Gastrocnemius medialis (tissue), 4 donors: ENCODE measurements at regions of chr16 and their contacts with region 1.

Region 1: GRCh38 chr16:84186685-84187437 is at the start of gene TAF1C:
- DNase-seq: peak; percentile 74 to 92
- ATAC-seq: peak; percentile 91 to 97
- H3K4me3 ChIP-seq: peak within 1 kb of the TSS; percentile 74 to 100 (median 98)
- H3K27ac ChIP-seq: peak within 1 kb of the TSS; percentile 81 to 86 (median 82)
- H3K4me1 ChIP-seq: peaks cover 0 to 8% of the 10 kb centered on the region in 2 donors
- H3K27me3 ChIP-seq: no peaks in the 10 kb centered on the region
- CTCF ChIP-seq: peak; percentile 92 to 97 (median 96)
- POLR2A ChIP-seq: peak; percentile 10 to 34
- total RNA-seq, gene TAF1C: 6.8 to 35.5 (median 12.3) TPM

Region 2: GRCh38 chr16:83807710-83808572 is 378.9 kb before region 1 on chr16 and contains the start of gene HSBP1:
- in situ Hi-C with region 1: loop called in 1 of 4 experiments (anchors 25 kb)
- intact Hi-C with region 1: no loop called
- DNase-seq: peak; percentile 89 to 94
- ATAC-seq: peak; percentile 96
- H3K4me3 ChIP-seq: peak within 1 kb of the TSS; percentile 85 to 96 (median 90)
- H3K27ac ChIP-seq: peak within 1 kb of the TSS; percentile 73 to 86 (median 84)
- H3K4me1 ChIP-seq: peaks cover 10 to 17% of the 10 kb centered on the region in 2 donors
- H3K27me3 ChIP-seq: no peaks in the 10 kb centered on the region
- CTCF ChIP-seq: peak in 2 of 5 experiments; percentile 13 to 20
- POLR2A ChIP-seq: peak; percentile 68
- total RNA-seq, gene HSBP1: 7.5 to 28.0 (median 8.7) TPM

Region 3: GRCh38 chr16:83967806-83968305 is 219.0 kb before region 1 on chr16 and contains the start of gene NECAB2:
- in situ Hi-C with region 1: loop called in 1 of 4 experiments (anchors 25 kb)
- intact Hi-C with region 1: loop called (anchors 5 kb)
- DNase-seq: no peak
- ATAC-seq: no peak
- H3K4me3 ChIP-seq: peak within 1 kb of the TSS in 2 of 4 donors; percentile 28 to 29
- H3K27ac ChIP-seq: no peak within 1 kb of the TSS
- H3K4me1 ChIP-seq: no peaks in the 10 kb centered on the region
- H3K27me3 ChIP-seq: peaks cover 0 to 7% (median 0%) of the 10 kb centered on the region in 3 donors
- CTCF ChIP-seq: peak in 3 of 5 experiments; percentile 32 to 69 (median 56)
- POLR2A ChIP-seq: no peak
- total RNA-seq, gene NECAB2: not detected

Region 4: GRCh38 chr16:84116720-84117493 is 70.0 kb before region 1 on chr16 and contains the start of gene MBTPS1:
- in situ Hi-C with region 1: no loop called
- intact Hi-C with region 1: loop called (anchors 1 kb)
- DNase-seq: peak; percentile 96 to 97
- ATAC-seq: peak; percentile 93
- H3K4me3 ChIP-seq: peak within 1 kb of the TSS; percentile 90 to 99 (median 96)
- H3K27ac ChIP-seq: peak within 1 kb of the TSS; percentile 90 to 94 (median 92)
- H3K4me1 ChIP-seq: peaks cover 28 to 38% of the 10 kb centered on the region in 2 donors
- H3K27me3 ChIP-seq: no peaks in the 10 kb centered on the region
- CTCF ChIP-seq: peak in 2 of 5 experiments; percentile 69 to 74
- POLR2A ChIP-seq: peak; percentile 86 to 88
- total RNA-seq, gene MBTPS1: 28.8 to 44.3 (median 38.5) TPM

Region 5: GRCh38 chr16:84209989-84210388 is 23.1 kb after region 1 on chr16:
- in situ Hi-C with region 1: no loop called
- intact Hi-C with region 1: no loop called
- DNase-seq: no peak
- ATAC-seq: no peak
- H3K4me3 ChIP-seq: no peak overlapping the region
- H3K27ac ChIP-seq: no peak overlapping the region
- H3K4me1 ChIP-seq: peaks cover 9 to 12% of the 10 kb centered on the region in 2 donors
- H3K27me3 ChIP-seq: no peaks in the 10 kb centered on the region
- CTCF ChIP-seq: no peak
- POLR2A ChIP-seq: no peak

Region 6: GRCh38 chr16:84260766-84261554 is 74.1 kb after region 1 on chr16:
- in situ Hi-C with region 1: no loop called
- intact Hi-C with region 1: no loop called
- DNase-seq: no peak
- ATAC-seq: no peak
- H3K4me3 ChIP-seq: no peak overlapping the region
- H3K27ac ChIP-seq: no peak overlapping the region
- H3K4me1 ChIP-seq: no peaks in the 10 kb centered on the region
- H3K27me3 ChIP-seq: peaks cover 0 to 13% (median 2%) of the 10 kb centered on the region in 3 donors
- CTCF ChIP-seq: no peak
- POLR2A ChIP-seq: no peak

Region 7: DNA sequence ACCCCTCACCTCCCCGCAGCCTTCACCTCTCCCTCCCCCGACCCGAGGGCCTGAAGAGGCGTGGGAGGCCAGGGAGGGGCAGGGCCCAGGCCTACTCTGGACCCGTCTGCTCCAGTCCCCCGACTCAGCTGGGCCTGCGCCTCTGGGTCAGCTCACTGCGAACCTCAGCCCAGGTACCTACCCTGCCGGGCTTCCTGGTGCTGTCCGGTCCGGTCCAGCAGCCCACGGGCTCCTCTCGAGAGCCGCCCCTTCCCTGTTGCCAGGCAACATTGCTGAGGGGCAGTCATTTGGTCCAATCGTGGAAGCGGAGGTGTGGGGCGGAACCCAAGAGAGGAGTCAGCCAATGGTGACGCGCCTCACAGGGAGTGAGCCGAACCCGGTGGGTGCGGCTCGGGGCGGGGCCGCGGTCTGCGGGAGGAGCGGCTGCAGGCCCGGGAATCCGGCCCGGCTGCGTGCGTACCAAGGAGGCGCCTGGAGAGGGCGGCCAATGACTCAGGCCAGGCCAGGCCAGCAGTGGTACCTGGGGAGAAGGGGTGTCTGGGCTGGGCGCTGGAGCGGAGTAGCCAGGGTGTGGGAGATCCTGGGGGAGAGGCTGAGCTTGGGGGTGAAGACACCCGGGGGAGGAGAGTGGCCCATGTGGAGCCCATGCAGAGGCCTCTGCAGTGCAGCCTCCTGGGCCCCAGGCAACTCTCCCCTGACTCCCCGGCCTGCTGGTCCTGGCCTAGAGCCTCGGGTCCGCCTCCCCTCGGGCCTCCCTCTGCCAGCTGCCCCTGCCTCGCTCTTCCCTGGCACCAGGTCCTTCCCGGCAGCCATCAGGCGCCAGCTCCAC is 317.8 kb after region 1 on chr16 and contains the start of gene MEAK7:
- in situ Hi-C with region 1: no loop called
- intact Hi-C with region 1: loop called (anchors 2 kb)
- DNase-seq: peak; percentile 97 to 98
- ATAC-seq: peak; percentile 97 to 98
- H3K4me3 ChIP-seq: peak within 1 kb of the TSS; percentile 79 to 95 (median 90)
- H3K27ac ChIP-seq: peak within 1 kb of the TSS; percentile 89 to 94 (median 92)
- H3K4me1 ChIP-seq: peaks cover 14 to 27% of the 10 kb centered on the region in 2 donors
- H3K27me3 ChIP-seq: no peaks in the 10 kb centered on the region
- CTCF ChIP-seq: no peak
- POLR2A ChIP-seq: peak; percentile 75 to 76
- total RNA-seq, gene MEAK7: 2.6 to 7.1 (median 5.0) TPM